Naive thymus-derived CD4-positive, alpha-beta T cell (primary cell): ENCODE measurements at regions of chr2 and their contacts with region 1.

Region 1: DNA sequence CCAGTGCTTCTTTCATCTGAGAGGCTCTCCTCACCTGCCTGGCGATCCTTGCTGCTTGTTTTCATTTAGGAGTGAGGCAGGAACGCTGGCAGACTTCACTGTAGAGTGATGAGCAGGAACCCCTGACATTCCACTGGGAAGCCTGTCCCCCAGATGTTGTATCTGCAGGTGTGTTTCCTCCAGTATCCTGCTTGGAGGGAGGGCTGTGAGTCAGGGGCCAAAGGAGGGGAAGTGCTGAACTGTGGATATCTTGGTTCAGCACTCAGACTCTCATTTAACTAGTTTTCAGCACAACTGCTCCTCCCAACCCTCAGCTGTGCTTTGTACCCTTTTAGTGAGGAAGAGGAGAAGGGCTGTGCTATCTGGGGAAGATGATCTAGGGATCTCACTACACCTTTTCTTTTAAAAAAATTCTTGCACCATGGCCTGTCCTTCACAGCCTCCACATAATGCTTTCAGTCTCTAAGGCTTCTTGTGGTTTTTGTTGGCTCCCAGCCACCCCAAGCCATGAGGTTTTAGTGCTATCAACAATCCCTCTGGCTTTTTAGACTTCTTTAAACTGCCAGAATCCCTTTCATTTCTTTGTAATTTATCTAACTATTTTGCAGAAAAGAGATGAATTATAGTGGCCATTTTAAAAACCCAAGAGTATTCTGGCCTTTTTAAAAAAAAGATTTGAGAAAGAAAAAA is 11.2 kb downstream of the ANKAR start:
- DNase-seq: no peak
- ATAC-seq: no peak
- H3K4me3 ChIP-seq: no peak overlapping the region
- H3K4me3 Mint-ChIP-seq: no peak overlapping the region
- H3K27ac ChIP-seq: no peak overlapping the region
- H3K27ac Mint-ChIP-seq: peak overlapping the region in 2 of 9 donors; percentile 0 to 55
- H3K4me1 ChIP-seq: peaks cover 3 to 6% of the 10 kb centered on the region in 2 donors
- H3K4me1 Mint-ChIP-seq: peaks cover 8 to 38% (median 20%) of the 10 kb centered on the region in 7 donors
- H3K27me3 ChIP-seq: no peaks in the 10 kb centered on the region
- H3K27me3 Mint-ChIP-seq: no peaks in the 10 kb centered on the region

Region 2: DNA sequence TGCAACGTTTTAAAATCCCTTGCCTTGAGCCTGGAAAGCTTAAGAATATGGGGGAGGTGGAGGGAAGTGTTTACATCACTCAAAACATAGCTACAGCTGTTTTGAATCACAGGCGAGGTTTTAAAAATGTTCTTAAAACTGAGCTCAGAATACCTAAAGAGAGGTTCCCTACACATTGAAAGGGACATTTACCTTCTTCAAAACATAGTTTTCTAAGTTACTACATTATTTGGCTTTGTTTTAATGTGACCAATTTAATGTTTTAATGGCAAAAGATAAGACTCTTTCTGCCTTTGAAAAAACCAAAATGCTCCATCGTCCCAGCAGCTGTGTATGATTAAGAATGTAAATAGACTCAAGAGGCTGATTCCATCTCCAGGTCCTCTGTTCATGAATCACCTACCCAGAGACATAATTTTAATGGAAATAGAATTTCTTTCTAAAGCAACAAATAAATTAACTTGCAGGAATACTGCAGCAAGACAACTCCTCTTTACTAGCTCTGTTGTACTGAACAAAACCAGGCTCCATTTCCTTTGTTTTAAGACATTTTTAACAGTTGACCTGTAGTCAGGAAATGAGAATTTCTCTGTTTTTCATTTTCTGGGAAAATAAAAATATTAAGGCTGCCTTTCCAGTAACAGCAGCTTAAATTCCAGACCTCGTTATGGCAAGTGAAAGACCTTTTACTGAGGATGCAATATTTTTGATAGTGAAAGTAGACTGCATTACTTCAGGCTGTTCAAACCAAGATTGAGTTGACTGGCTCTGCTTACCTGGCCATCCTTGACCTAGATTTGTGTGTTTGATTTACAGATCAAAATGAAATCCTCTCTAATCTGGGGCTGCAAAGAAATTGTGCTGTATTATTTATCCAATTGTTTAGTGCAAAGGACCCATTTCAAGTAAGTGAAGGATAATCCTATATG is 278.1 kb before region 1 on chr2:
- CTCF ChIA-PET with region 1: no interaction called
- POLR2A ChIA-PET with region 1: no interaction called
- intact Hi-C with region 1: no loop called
- DNase-seq: no peak
- ATAC-seq: no peak
- H3K4me3 ChIP-seq: no peak overlapping the region
- H3K4me3 Mint-ChIP-seq: peak overlapping the region in 6 of 10 donors; percentile 17 to 48 (median 30)
- H3K27ac ChIP-seq: no peak overlapping the region
- H3K27ac Mint-ChIP-seq: peak overlapping the region in 5 of 9 donors; percentile 13 to 58 (median 21)
- H3K4me1 ChIP-seq: peaks cover 0 to 8% of the 10 kb centered on the region in 2 donors
- H3K4me1 Mint-ChIP-seq: peaks cover 5 to 23% (median 18%) of the 10 kb centered on the region in 7 donors
- H3K27me3 ChIP-seq: no peaks in the 10 kb centered on the region
- H3K27me3 Mint-ChIP-seq: no peaks in the 10 kb centered on the region

Region 3: GRCh38 chr2:189674374-189675112 is 11.1 kb before region 1 on chr2 and contains the start of gene ANKAR:
- CTCF ChIA-PET with region 1: interaction called, 3 read pairs
- POLR2A ChIA-PET with region 1: interaction called, 5 read pairs
- intact Hi-C with region 1: loop called in 1 of 2 experiments (anchors 1 kb)
- DNase-seq: peak; percentile 71 to 88 (median 84)
- ATAC-seq: peak; percentile 98
- H3K4me3 ChIP-seq: peak within 1 kb of the TSS; percentile 62
- H3K4me3 Mint-ChIP-seq: peak within 1 kb of the TSS; percentile 88 to 96 (median 95)
- H3K27ac ChIP-seq: peak within 1 kb of the TSS; percentile 86
- H3K27ac Mint-ChIP-seq: peak within 1 kb of the TSS; percentile 96 to 99 (median 97)
- H3K4me1 ChIP-seq: peaks cover 9 to 12% of the 10 kb centered on the region in 2 donors
- H3K4me1 Mint-ChIP-seq: peaks cover 17 to 49% (median 40%) of the 10 kb centered on the region in 7 donors
- H3K27me3 ChIP-seq: no peaks in the 10 kb centered on the region
- H3K27me3 Mint-ChIP-seq: no peaks in the 10 kb centered on the region
- total RNA-seq, gene ANKAR: 4.3 to 17.9 (median 10.3) TPM